Activated CD4-positive, alpha-beta memory T cell treated with anti-CD3 and anti-CD28 coated beads, Interleukin-2, amount 10 ng/mL, durations not matched to agents 7 days and 5 days (primary cell): ENCODE measurements at regions of chr17 and their contacts with region 1.

Region 1: DNA sequence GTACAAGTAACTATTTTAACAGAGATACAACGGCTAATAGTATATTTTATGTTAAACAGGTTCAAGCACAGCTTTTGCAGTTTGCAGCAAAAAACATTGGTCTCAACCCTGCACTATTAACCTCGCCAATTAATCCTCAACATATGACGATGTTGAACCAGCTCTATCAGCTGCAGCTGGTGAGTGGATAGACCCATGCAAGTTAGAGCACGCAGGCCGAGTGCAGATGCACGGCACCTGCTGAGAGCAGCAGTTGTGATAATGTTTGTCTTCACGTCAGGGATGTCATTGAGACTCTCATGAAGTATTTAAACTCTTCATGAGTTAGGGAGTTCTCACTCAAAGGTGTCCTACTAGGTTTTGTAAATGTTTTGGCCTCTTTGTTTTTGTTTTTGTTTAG is 45.6 kb downstream of the TMC6 start:
- DNase-seq: no peak
- H3K4me3 Mint-ChIP-seq: no peak overlapping the region
- H3K27ac Mint-ChIP-seq: no peak overlapping the region
- H3K4me1 Mint-ChIP-seq: peaks cover 17% of the 10 kb centered on the region
- H3K27me3 Mint-ChIP-seq: no peaks in the 10 kb centered on the region

Region 2: DNA sequence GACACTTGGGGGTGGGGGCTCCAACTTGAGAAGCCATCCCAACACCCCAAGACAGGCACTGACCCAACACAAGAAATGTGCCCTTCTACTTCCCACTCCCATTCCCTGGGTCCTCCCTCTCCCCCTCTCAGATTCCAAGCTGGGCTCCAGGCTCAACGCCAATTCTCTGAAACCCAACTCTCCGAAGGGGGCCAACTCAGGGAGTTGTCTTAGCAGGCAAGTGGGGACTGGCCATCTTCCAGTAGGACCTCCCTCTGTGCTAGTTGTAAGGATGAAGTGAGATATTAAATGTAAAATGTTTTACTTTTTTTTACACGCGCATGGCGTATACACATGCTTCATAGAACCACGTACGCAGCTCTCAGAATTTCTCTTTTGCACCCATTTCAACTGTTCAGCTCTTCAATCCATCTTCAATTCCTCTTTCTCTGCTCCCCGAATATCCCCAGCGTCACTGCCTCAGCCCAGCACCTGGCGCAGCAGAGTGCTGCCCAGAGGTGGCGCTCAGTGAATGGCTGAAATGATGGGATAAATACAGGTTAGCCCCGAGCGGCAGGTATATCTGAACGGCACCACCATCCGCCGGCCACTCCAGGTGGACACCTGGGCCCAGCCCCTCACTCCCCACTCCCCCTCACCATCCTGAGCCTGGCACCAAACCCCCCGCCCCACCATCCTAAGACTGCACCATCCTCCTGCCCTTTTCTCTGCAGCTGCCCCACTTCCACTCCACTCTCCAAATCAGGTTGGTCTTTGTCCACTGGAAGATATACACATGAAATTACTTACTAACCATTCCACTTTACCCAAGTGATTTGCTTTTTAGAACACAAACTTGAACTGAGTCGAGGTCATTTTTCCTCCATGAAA is 168.4 kb before region 1 on chr17:
- CTCF ChIA-PET with region 1: no interaction called
- POLR2A ChIA-PET with region 1: no interaction called
- DNase-seq: no peak
- H3K4me3 Mint-ChIP-seq: no peak overlapping the region
- H3K27ac Mint-ChIP-seq: no peak overlapping the region
- H3K4me1 Mint-ChIP-seq: peaks cover 10% of the 10 kb centered on the region
- H3K27me3 Mint-ChIP-seq: peaks cover 66% of the 10 kb centered on the region

Region 3: GRCh38 chr17:78012428-78012827 is 70.6 kb before region 1 on chr17:
- CTCF ChIA-PET with region 1: no interaction called
- POLR2A ChIA-PET with region 1: no interaction called
- DNase-seq: no peak
- H3K4me3 Mint-ChIP-seq: no peak overlapping the region
- H3K27ac Mint-ChIP-seq: no peak overlapping the region
- H3K4me1 Mint-ChIP-seq: peaks cover 6% of the 10 kb centered on the region
- H3K27me3 Mint-ChIP-seq: no peaks in the 10 kb centered on the region

Region 4: GRCh38 chr17:78063489-78063888 is 19.5 kb before region 1 on chr17:
- CTCF ChIA-PET with region 1: interaction called, 12 read pairs
- POLR2A ChIA-PET with region 1: no interaction called
- DNase-seq: no peak
- H3K4me3 Mint-ChIP-seq: no peak overlapping the region
- H3K27ac Mint-ChIP-seq: no peak overlapping the region
- H3K4me1 Mint-ChIP-seq: peaks cover 14% of the 10 kb centered on the region
- H3K27me3 Mint-ChIP-seq: no peaks in the 10 kb centered on the region

Region 5: DNA sequence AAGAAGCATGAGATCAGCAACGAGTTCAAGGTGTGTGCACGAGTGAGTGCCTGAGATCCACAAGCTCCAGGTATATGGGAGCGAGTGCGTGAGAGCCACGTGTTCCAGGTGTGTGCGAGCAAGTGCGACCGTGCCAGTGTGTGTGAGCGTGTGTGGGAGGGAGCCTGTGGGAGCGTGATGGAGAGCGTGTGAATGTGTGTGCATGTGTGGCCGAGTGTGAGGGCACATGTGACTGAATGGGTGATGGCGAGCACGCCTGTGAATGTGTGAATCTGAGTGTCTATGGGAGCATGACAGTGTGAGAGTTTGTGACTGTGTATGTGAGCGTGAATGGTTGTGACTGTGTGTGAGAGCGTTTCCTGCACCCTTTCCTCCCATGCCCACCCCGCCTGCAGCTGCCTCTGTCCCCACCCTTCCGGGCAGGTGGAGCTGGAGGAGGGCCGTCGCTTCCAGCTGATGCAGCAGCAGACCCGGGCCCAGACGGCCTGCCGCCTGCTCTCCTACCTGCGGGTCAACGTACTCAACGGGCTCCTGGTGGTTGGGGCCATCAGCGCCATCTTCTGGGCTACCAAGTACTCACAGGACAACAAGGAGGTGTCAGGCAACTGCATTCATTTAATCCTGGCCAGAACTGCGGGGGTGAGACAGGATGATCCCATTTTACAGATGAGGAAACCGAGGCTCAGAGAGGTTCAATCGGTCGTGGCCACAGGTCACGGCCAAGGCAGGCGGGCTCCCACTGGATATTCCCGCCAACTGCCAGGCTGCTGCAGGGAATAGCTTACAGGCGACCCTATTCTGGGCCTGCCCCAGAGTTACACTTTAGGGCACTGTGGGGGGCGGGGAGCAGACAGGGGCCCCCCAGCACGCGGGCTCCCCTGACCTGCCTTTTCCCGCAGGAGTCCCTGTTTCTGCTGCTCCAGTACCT is 51.2 kb after region 1 on chr17:
- CTCF ChIA-PET with region 1: interaction called, 12 read pairs
- POLR2A ChIA-PET with region 1: no interaction called
- DNase-seq: peak; percentile 88
- H3K4me3 Mint-ChIP-seq: peak overlapping the region; percentile 87
- H3K27ac Mint-ChIP-seq: peak overlapping the region; percentile 89
- H3K4me1 Mint-ChIP-seq: peaks cover 74% of the 10 kb centered on the region
- H3K27me3 Mint-ChIP-seq: no peaks in the 10 kb centered on the region

Region 6: DNA sequence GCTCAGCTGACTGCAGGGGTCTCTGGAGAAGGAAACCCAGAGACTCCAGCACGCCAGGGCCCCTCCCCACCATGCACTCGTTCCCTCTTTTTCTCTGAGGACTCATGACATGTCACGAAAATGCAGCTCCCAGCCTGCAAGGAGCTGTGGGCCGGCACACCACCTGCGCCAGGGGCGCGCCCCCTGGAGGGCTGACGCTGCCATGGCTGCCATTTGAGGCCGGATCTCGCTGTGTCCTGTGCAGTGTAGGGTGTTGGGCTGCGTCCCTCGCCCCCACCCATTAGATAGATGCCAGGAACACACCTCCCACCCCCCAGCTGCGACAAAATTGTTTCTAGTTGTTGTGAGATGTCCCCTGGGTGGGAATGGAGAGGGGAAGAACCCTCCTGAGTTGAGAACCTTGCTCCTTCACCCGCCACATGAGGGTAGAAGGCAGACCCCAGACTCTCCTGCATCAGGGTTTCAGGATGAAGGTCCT is 93.6 kb after region 1 on chr17:
- CTCF ChIA-PET with region 1: interaction called, 35 read pairs
- POLR2A ChIA-PET with region 1: interaction called, 4 read pairs
- DNase-seq: peak; percentile 82
- H3K4me3 Mint-ChIP-seq: no peak overlapping the region
- H3K27ac Mint-ChIP-seq: peak overlapping the region; percentile 19
- H3K4me1 Mint-ChIP-seq: peaks cover 66% of the 10 kb centered on the region
- H3K27me3 Mint-ChIP-seq: no peaks in the 10 kb centered on the region

Region 7: DNA sequence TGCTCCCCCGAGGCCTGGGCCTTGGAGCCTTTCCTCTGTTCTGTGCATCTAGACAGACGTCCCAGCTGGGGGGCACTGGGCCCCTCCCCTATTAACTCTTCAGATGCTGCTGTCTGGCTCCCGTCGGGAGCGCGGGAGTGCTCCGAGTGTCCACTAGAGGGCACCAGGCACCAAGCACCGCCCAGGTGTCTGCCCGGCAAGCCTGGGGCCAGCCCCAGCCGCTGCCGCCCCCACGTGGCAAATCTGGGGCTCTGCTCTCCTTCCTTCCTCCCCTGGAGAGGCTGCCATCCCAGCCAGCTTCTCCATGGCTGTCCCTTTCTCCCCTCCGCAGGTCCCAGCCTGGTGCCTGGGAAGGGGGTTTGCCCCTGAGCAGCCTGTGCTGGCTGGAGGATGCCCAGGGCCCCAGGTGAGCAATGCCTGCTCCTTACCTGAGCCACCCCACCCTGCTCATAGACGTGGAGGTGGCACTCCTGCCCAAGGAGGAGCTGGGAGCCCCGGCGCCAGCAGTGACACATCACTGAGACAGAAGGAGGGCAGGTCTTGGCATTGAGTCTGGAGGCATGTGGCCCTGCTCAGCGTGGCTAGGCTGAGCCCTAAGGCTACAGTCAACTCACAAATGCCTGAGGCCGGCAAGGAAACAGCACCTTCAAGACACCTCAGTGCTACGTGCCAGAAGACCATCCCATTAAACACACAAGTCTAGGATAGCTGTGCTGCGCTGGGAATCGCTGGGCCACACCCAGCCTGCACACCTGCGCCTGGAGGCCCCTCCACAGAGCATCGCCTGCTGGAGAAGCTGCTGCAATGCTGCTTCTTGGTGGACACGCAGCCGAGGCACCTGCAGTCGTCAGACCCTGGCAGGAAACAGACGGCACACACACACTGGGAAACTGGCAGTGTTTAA is 168.2 kb after region 1 on chr17:
- CTCF ChIA-PET with region 1: interaction called, 25 read pairs
- POLR2A ChIA-PET with region 1: no interaction called
- DNase-seq: peak; percentile 89
- H3K4me3 Mint-ChIP-seq: peak overlapping the region; percentile 75
- H3K27ac Mint-ChIP-seq: peak overlapping the region; percentile 79
- H3K4me1 Mint-ChIP-seq: peaks cover 48% of the 10 kb centered on the region
- H3K27me3 Mint-ChIP-seq: peaks cover 4% of the 10 kb centered on the region